Activated CD8-positive, alpha-beta T cell treated with anti-CD3 and anti-CD28 coated beads, Interleukin-2, amount 10 ng/mL, durations not matched to agents 7 days and 5 days (primary cell): ENCODE measurements at regions of chr1 and their contacts with region 1.

Region 1: DNA sequence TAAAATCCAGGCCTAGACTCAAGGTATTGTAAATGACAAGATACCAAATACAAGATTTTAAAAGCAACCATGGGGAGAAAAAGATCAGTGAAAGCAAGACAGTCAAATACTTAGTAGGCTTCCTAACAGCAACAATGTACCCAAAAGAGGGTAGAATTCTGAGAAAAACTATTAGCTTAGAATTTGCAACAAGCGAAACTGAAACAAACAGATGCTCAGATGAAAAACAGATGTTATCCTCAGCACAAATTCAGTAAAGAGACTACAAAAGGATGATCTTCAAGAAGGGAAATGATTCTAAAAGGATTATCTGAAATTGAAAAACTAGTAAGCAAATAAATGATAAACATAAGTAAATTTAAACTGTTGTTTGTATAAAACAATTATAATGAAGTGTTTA is 40.0 kb downstream of the PDC start:
- DNase-seq: no peak
- ATAC-seq: peak; percentile 42
- H3K4me3 Mint-ChIP-seq: peak overlapping the region; percentile 16
- H3K27ac Mint-ChIP-seq: peak overlapping the region; percentile 84
- H3K4me1 Mint-ChIP-seq: peaks cover 20% of the 10 kb centered on the region
- H3K27me3 Mint-ChIP-seq: no peaks in the 10 kb centered on the region

Region 2: DNA sequence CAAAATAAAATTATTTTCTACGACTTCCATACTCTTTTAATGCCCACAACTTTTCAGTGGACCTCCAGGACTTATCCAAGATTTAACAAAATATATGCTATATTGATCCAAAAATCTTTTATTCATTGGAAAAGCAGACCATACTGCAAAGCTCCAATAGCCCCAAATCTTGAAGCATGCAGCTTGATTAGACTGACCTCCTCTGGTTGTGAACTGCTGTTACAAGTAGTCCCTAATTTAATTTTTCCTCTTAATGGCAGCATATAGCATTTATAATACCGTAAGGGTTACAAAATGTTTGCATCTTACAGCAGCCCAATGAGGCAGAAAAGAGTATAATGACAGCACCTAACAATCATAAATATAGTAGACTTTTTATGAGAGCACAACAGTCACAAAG is 95.7 kb before region 1 on chr1:
- CTCF ChIA-PET with region 1: no interaction called
- POLR2A ChIA-PET with region 1: no interaction called
- DNase-seq: no peak
- ATAC-seq: no peak
- H3K4me3 Mint-ChIP-seq: no peak overlapping the region
- H3K27ac Mint-ChIP-seq: no peak overlapping the region
- H3K4me1 Mint-ChIP-seq: peaks cover 10% of the 10 kb centered on the region
- H3K27me3 Mint-ChIP-seq: no peaks in the 10 kb centered on the region

Region 3: GRCh38 chr1:186404454-186405051 is 16.4 kb before region 1 on chr1:
- CTCF ChIA-PET with region 1: interaction called, 13 read pairs
- POLR2A ChIA-PET with region 1: no interaction called
- DNase-seq: no peak
- ATAC-seq: peak; percentile 60
- H3K4me3 Mint-ChIP-seq: no peak overlapping the region
- H3K27ac Mint-ChIP-seq: no peak overlapping the region
- H3K4me1 Mint-ChIP-seq: peaks cover 2% of the 10 kb centered on the region
- H3K27me3 Mint-ChIP-seq: no peaks in the 10 kb centered on the region

Region 4: GRCh38 chr1:186708613-186709203 is 287.8 kb after region 1 on chr1:
- CTCF ChIA-PET with region 1: no interaction called
- POLR2A ChIA-PET with region 1: no interaction called
- DNase-seq: no peak
- ATAC-seq: no peak
- H3K4me3 Mint-ChIP-seq: no peak overlapping the region
- H3K27ac Mint-ChIP-seq: no peak overlapping the region
- H3K4me1 Mint-ChIP-seq: no peaks in the 10 kb centered on the region
- H3K27me3 Mint-ChIP-seq: no peaks in the 10 kb centered on the region